Sciatic nerve (tissue), 2 donors: ENCODE measurements at regions of chr3 and their contacts with region 1.

Region 1: DNA sequence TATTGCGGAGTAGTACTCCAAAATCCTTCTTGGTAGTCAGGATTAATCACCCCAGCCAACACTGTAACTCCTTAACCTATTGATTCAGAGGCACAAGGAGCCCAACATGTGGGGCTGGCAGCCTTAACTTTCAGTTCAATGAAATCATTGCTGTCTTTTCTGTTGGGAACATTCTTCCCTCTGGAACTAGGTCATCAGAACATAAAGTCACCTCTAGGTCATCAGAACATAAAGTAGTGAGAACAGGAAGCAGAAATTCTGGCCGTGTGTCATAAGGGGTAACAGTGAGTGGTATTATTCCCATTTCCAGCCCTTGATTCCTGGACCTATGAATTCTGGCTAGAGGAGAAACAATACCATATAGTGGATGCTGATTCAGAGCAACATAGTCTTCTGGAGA is 71.5 kb upstream of the TNIK start:
- DNase-seq: no peak
- ATAC-seq: no peak

Region 2: GRCh38 chr3:171516765-171517164 is 15.0 kb before region 1 on chr3:
- intact Hi-C with region 1: no loop called
- DNase-seq: no peak
- ATAC-seq: no peak

Region 3: DNA sequence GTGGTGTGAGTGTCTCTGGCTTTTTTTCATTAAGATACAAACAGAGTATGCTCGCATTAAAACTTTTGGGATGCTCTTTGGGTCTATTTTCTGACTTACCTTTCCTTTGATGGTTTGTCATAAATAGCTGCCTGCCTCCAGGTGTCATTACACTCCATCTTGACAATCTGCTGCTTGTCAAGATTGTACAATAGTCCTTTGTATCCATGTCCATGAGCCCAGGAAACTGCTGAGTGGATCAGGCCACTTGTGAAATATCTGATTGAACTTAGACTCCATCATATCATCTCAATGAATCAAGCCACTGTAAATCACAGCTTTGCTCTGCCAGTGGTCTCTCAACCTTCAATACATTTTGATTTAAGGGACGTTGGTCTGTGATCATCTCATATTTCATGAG is 1354.0 kb after region 1 on chr3:
- intact Hi-C with region 1: loop called (anchors 10 kb)
- DNase-seq: no peak
- ATAC-seq: no peak